Naive thymus-derived CD8-positive, alpha-beta T cell (primary cell): ENCODE measurements at regions of chr3 and their contacts with region 1.

Region 1: DNA sequence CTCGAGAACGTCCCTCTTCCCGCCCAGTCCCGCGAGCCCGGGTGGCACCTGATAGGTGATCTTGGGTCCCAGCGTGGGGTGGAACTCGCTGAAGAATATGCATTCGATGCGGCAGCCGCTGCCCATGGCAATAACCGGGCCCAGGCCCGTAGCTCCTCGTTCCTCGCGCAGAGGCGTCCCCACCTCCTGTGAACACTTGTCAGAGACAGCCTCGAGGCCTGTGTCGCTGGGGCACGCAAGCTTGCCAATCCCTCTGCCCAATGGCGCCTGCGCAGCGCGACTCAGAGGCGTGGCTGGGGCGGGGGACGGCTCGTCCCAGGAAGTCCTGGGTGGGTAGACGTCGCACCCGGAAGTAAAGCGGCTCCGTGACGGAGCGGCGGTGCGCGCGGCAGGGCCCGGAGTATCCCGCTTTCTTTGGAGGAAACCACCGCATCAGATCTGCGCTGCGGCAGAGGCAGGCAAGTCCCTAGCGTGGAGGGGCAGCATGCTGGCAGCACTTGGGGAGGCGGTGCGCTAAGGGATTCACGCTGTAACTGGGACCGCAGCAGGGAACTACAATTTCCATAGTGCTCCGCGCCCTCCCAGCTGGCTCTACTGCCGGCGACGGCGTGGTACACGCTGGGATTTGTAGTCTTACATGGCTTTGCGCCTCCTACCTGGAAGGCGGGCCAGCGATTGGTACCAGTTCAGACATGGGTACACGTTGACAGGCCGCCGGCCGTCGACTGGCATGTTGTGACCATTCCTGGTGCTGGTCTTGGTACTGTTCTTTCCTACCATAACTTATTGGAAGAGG is at the starts of genes CYB561D2 and NPRL2:
- DNase-seq: peak; percentile 97 to 99 (median 99)
- ATAC-seq: peak; percentile 89 to 90
- H3K4me3 Mint-ChIP-seq: peak within 1 kb of the TSS; percentile 94 to 99 (median 97)
- H3K27ac Mint-ChIP-seq: peak within 1 kb of the TSS; percentile 98 to 100 (median 99)
- H3K4me1 Mint-ChIP-seq: peaks cover 34 to 82% (median 68%) of the 10 kb centered on the region in 4 donors
- H3K27me3 Mint-ChIP-seq: no peaks in the 10 kb centered on the region
- polyA plus RNA-seq, gene CYB561D2: 45.5 to 48.2 (median 47.7) TPM
- polyA plus RNA-seq, gene NPRL2: 36.2 to 45.3 (median 36.4) TPM

Region 2: GRCh38 chr3:50327943-50328691 is 22.6 kb before region 1 on chr3 and contains the start of gene TUSC2:
- POLR2A ChIA-PET with region 1: interaction called, 14 read pairs
- DNase-seq: peak; percentile 89 to 97 (median 92)
- ATAC-seq: peak; percentile 93 to 96
- H3K4me3 Mint-ChIP-seq: peak within 1 kb of the TSS; percentile 84 to 97 (median 94)
- H3K27ac Mint-ChIP-seq: peak within 1 kb of the TSS; percentile 85 to 97 (median 95)
- H3K4me1 Mint-ChIP-seq: peaks cover 6 to 38% (median 34%) of the 10 kb centered on the region in 4 donors
- H3K27me3 Mint-ChIP-seq: no peaks in the 10 kb centered on the region
- polyA plus RNA-seq, gene TUSC2: 48.4 to 54.3 (median 53.7) TPM